Gastrocnemius medialis (tissue), 4 donors: ENCODE measurements at regions of chr19 and their contacts with region 1.

Region 1: DNA sequence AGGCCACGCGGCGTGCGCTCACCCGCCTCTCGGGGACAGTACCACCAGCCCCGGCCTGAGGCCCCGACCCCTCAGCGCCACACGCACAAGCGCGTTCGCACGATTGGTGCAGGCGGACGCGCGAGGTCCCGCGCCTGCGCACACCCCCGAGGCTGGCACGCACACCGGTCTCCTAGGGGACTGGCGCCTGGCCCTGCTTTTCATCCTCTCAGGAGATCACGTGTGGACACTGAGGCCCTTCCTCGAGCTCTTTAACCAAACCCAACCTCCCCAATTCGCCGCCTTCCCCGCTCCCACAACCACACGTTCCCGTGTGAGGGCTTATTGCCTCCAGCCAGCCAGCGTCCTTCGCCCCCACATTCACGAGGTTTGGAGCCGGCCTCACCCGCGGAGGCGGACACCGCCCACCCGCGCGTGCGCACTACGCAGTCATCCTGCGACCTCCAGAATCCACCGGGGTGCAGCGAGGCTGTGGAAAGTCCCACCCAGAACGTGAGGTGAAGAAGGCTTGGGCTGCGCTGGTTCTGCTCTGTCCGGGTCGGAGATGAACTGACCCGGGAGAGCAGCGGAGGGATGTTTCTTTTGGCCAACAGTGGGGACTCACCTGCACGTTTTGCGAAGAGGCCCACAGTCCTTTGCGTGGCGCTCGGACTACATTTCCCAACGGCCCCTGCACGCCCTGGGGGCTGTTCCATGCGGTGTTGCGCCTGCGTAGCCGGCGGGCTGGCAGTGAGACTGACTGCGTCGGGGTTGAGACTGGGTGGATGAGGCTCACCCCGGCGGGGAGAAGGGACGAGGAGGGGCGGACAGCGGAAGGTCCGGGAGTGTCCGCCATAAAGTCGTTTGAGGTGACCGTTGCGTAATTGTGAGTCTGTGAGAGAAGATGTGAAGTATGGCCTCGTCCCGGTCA is 539 bp upstream of the ZNF667 start:
- DNase-seq: peak; percentile 71 to 73
- ATAC-seq: peak; percentile 87 to 95
- H3K4me3 ChIP-seq: peak overlapping the region; percentile 46 to 83 (median 69)
- H3K27ac ChIP-seq: peak overlapping the region; percentile 54 to 86 (median 83)
- H3K4me1 ChIP-seq: peaks cover 0 to 5% of the 10 kb centered on the region in 2 donors
- H3K27me3 ChIP-seq: no peaks in the 10 kb centered on the region
- CTCF ChIP-seq: no peak
- POLR2A ChIP-seq: peak; percentile 31 to 42

Region 2: DNA sequence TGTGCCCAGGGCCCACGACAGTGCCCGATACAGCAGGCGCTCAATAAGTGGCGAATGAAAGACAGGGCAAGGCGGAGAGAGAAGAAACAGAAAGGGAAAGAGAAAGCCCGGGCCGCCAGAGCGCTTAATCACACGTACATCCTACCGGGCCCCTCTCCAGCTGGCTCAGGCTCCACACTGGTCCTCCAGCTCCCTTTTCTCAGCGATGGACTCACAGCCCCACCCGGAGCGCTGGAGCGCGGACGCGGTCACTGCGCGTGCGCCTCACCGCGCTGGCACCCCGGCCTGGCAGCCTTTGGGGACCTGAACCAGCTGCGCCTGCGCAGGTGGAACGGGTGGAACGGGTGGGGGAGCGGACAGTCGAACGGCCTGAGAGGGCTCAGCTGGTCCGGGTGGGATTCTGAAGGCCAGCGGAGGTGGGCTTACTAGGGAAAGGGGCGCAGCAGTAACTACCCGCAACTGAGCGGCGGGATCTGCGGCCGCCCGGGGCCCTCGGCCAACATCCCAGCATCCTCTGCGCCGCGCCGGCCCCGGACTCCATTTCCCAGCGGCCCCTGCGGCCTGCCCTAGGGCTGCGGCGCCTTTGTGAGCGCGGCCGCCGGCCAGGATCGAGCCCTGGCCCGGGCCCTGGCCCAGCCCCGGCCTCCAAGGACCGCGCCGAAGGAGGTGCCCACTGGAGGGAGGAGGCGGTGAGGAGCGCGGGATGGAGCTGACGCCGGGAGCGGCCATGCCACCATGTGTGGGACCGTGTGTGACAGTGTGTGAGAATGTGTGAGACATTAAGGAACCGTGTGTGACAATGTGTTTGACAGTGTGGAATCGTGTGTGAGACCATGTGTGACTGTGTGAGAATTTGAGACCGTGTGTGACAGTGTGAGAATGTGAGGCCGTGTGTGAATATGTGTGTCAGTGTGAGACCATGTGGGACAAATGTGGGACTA is 73.7 kb before region 1 on chr19 and contains the start of gene ZNF583:
- in situ Hi-C with region 1: no loop called
- intact Hi-C with region 1: loop called (anchors 1 kb)
- DNase-seq: peak; percentile 89 to 97
- ATAC-seq: peak; percentile 96 to 99
- H3K4me3 ChIP-seq: peak within 1 kb of the TSS; percentile 66 to 95 (median 84)
- H3K27ac ChIP-seq: peak within 1 kb of the TSS; percentile 90 to 93 (median 92)
- H3K4me1 ChIP-seq: peaks cover 12 to 14% of the 10 kb centered on the region in 2 donors
- H3K27me3 ChIP-seq: no peaks in the 10 kb centered on the region
- CTCF ChIP-seq: no peak
- POLR2A ChIP-seq: no peak
- total RNA-seq, gene ZNF583: 3.5 to 9.2 (median 4.3) TPM

Region 3: DNA sequence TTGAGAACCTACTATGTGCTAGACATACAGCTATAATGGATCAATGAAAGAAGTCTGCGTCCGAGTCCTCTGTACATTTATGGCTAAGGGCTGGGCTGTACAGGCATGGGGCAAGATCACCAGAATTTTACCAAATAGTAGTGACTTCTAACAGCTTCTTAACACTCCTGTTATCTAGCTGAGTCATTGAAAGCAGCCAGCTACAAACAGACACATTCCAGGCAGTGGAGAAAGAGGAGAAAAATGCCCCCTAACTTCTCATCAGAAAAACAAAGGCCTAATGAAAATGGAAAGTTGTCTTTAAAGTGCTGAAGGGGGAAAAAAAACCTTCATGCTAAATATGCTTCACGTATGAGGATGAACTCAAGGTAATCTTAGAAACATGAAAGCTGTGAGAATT is 13.7 kb after region 1 on chr19:
- in situ Hi-C with region 1: no loop called
- intact Hi-C with region 1: no loop called
- DNase-seq: no peak
- ATAC-seq: no peak
- H3K4me3 ChIP-seq: no peak overlapping the region
- H3K27ac ChIP-seq: no peak overlapping the region
- H3K4me1 ChIP-seq: no peaks in the 10 kb centered on the region
- H3K27me3 ChIP-seq: no peaks in the 10 kb centered on the region
- CTCF ChIP-seq: no peak
- POLR2A ChIP-seq: no peak